ENCODE measurements at regions of chr18 and their contacts with region 1.

Region 1: DNA sequence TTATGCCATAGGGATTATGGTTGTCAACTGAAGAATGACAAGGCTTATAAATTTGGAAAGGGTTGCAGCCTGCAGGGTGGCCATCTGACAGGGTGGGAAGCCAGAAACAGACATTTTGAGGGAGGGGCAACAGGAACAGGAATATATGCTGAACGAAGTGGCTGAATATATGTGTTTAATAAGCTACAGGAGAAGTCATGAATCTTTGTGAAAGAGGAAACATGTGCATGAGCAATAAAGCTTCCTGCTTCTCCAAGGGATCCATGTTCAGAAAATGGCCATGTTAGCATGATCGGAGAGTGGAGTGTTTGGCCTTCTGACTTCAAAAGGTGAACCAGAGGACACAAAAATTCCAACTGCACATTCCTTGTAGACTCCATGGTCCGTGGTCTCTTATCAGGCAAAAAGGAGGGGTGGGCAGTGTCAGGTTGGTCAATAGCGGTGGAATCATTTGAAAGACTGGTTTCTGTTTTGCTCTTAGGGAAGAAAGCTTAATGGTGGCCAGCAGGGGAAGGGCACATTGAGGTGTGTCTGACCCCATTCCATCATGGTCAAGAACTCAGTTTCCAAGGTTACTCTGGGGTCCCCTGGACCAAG is 144.1 kb downstream of the SOCS6 start:
- DNase-seq: no peak

Region 2: DNA sequence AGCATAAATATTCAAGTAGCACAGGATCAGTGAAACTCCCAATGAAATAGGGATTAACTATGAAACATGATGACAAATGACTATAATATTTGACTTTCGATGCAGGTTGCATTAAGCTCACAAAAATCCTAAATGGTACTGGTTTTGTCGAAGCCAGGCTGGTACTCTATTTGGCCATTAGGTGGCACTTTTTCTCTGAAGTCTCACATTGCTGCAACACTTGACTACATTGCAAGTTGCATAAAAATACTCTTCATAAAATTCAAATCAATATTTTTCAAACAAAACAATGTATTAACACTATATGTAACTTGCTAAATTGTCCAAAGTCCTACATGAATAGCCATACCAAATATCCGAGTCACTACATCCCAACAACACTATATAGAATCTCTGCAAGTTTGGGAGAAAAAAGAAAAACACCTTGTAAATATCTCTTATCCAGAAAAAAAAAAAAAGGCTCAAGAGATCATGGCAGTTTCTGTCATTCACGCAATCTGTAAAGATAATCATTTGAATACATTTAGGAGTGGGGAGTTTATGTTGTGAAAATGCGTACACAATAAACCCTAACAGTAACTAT is 237.0 kb before region 1 on chr18:
- CTCF ChIA-PET with region 1: interaction called, 24 read pairs
- POLR2A ChIA-PET with region 1: no interaction called
- DNase-seq: peak; percentile 16

Region 3: DNA sequence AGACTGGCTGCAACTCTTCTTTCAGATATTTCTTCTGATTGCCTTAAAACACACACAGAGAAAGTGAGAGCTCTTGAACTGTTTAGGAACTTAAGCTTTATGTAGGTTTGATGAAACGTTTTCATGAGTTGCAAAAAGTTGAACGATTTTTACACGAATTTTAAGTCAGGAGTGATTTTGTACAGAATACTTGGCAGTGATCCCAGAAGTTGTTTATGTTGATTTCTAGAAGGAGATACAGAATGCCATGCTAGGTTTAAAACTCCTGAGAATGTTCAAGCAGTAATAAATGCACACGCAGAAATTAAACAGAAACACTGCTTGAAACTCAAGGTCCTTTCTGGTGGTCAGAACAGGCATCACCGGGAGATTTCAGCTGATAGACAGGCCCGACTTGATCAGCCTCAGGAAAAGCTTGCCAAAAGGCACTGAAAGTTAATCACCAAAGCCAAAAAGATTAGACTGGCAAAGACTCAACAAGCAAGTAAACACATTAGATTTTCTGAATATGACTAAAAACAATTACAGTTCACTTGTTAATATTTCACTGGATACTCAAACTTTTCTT is 20.9 kb before region 1 on chr18:
- CTCF ChIA-PET with region 1: no interaction called
- POLR2A ChIA-PET with region 1: no interaction called
- DNase-seq: no peak

Region 4: GRCh38 chr18:70523035-70523791 is 90.3 kb after region 1 on chr18:
- CTCF ChIA-PET with region 1: no interaction called
- POLR2A ChIA-PET with region 1: no interaction called
- DNase-seq: peak; percentile 54